ENCODE measurements at regions of chr1 and their contacts with region 1.

Region 1: DNA sequence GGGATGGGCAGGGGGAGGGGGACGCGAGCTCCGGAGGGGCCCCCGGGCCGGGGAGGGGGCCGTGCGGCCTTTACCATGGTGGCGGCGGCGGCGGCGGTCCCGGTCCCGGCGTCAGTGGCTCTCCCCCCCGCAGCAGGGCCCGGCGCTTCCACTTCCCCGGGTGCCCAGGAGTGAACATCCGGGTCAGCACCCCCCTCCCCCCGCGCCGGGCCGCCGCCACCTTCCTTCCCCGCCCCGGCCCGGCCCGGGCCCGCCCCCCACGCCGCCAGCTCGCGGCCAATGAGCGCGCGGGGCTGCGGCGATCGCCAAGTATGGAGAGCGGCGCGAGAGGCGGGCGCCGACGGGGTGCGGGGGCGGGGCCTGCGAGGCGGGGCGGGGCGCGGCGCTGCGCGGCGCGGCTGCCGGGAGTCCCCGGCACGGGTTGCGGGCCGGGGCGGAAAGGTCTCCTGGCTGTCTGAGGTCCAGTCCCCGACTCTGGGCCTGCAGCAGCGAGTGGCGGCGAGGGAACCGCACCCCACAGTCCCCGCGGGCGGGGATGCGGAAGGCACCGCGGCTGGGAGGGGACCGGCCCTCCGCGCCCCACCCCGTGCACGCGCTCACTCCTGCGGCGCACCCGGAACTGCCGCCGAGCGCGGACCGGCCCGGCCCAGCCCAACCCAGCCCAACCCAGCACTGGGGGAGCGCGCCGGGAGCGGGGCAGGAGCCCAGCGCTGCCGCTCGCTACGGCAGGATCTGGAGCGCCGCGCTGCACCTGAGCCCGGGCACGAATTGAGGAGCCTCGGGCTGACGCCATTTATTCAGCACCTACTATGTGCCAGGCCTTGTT is at the start of gene CAPZB:
- DNase-seq: peak; percentile 98
- ATAC-seq: peak; percentile 87
- H3K4me3 Mint-ChIP-seq: peak within 1 kb of the TSS; percentile 96
- H3K27ac Mint-ChIP-seq: peak within 1 kb of the TSS; percentile 94
- H3K4me1 Mint-ChIP-seq: peaks cover 59% of the 10 kb centered on the region
- H3K27me3 Mint-ChIP-seq: no peaks in the 10 kb centered on the region
- total RNA-seq, gene CAPZB: 320 to 346 TPM

Region 2: GRCh38 chr1:19251305-19252196 is 234.0 kb before region 1 on chr1 and contains the starts of genes EMC1 and MRTO4:
- CTCF ChIA-PET with region 1: interaction called, 3 read pairs
- POLR2A ChIA-PET with region 1: no interaction called
- intact Hi-C with region 1: loop called in 1 of 2 experiments (anchors 1 kb)
- DNase-seq: peak; percentile 94
- ATAC-seq: peak; percentile 87
- H3K4me3 Mint-ChIP-seq: peak within 1 kb of the TSS; percentile 99
- H3K27ac Mint-ChIP-seq: peak within 1 kb of the TSS; percentile 96
- H3K4me1 Mint-ChIP-seq: peaks cover 45% of the 10 kb centered on the region
- H3K27me3 Mint-ChIP-seq: no peaks in the 10 kb centered on the region
- total RNA-seq, gene EMC1: 45.0 to 59.0 TPM
- total RNA-seq, gene MRTO4: 82.6 to 95.0 TPM

Region 3: GRCh38 chr1:19390901-19391595 is 94.5 kb before region 1 on chr1:
- CTCF ChIA-PET with region 1: interaction called, 6 read pairs
- POLR2A ChIA-PET with region 1: no interaction called
- intact Hi-C with region 1: loop called (anchors 1 to 2 kb)
- DNase-seq: peak; percentile 77
- ATAC-seq: peak; percentile 52
- H3K4me3 Mint-ChIP-seq: peak overlapping the region; percentile 73
- H3K27ac Mint-ChIP-seq: peak overlapping the region; percentile 95
- H3K4me1 Mint-ChIP-seq: peaks cover 81% of the 10 kb centered on the region
- H3K27me3 Mint-ChIP-seq: no peaks in the 10 kb centered on the region

Region 4: GRCh38 chr1:19462781-19463503 is 22.6 kb before region 1 on chr1:
- CTCF ChIA-PET with region 1: interaction called, 15 read pairs
- POLR2A ChIA-PET with region 1: no interaction called
- intact Hi-C with region 1: loop called (anchors 1 to 2 kb)
- DNase-seq: peak; percentile 64
- ATAC-seq: no peak
- H3K4me3 Mint-ChIP-seq: peak overlapping the region; percentile 9
- H3K27ac Mint-ChIP-seq: peak overlapping the region; percentile 86
- H3K4me1 Mint-ChIP-seq: peaks cover 89% of the 10 kb centered on the region
- H3K27me3 Mint-ChIP-seq: no peaks in the 10 kb centered on the region

Region 5: DNA sequence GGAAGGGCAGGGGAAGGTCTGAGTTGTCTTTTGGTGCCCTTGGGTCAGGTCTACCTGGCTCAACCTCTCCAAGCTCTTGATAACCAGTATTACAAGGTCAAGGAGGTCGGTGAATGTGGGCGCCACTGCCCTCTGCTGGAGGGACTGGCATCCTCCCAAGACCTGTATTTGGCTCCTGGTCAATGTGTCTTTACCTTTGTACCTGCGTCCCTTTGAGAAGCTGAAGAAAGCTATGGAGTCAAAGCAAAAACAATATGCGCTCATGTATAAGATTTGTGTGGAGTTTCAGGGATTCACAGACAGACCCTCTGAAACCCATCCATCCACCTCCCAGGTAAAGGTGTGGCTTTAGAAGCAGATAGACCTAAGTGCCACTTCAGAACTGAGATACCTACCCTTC is 96.7 kb after region 1 on chr1:
- CTCF ChIA-PET with region 1: interaction called, 22 read pairs
- POLR2A ChIA-PET with region 1: no interaction called
- intact Hi-C with region 1: loop called (anchors 1 kb)
- DNase-seq: peak; percentile 89
- ATAC-seq: peak; percentile 96
- H3K4me3 Mint-ChIP-seq: no peak overlapping the region
- H3K27ac Mint-ChIP-seq: no peak overlapping the region
- H3K4me1 Mint-ChIP-seq: peaks cover 8% of the 10 kb centered on the region
- H3K27me3 Mint-ChIP-seq: peaks cover 2% of the 10 kb centered on the region

Region 6: GRCh38 chr1:19643602-19644394 is 158.2 kb after region 1 on chr1 and contains the start of gene NBL1:
- CTCF ChIA-PET with region 1: interaction called, 5 read pairs
- POLR2A ChIA-PET with region 1: no interaction called
- intact Hi-C with region 1: loop called in 1 of 2 experiments (anchors 2 kb)
- DNase-seq: peak; percentile 84
- ATAC-seq: peak; percentile 84
- H3K4me3 Mint-ChIP-seq: peak within 1 kb of the TSS; percentile 88
- H3K27ac Mint-ChIP-seq: peak within 1 kb of the TSS; percentile 64
- H3K4me1 Mint-ChIP-seq: peaks cover 21% of the 10 kb centered on the region
- H3K27me3 Mint-ChIP-seq: peaks cover 18% of the 10 kb centered on the region
- total RNA-seq, gene NBL1: 10.5 to 10.7 TPM